Breast epithelium (tissue), 4 donors: ENCODE measurements at regions of chr20 and their contacts with region 1.

Region 1: GRCh38 chr20:35893942-35894341 is 60.4 kb downstream of the SCAND1 start:
- DNase-seq: no peak
- H3K4me3 ChIP-seq: no peak overlapping the region
- H3K27ac ChIP-seq: no peak overlapping the region
- H3K4me1 ChIP-seq: no peaks in the 10 kb centered on the region
- H3K27me3 ChIP-seq: no peaks in the 10 kb centered on the region
- CTCF ChIP-seq: no peak
- POLR2A ChIP-seq: no peak

Region 2: GRCh38 chr20:35523298-35523888 is 370.5 kb before region 1 on chr20:
- intact Hi-C with region 1: loop called (anchors 10 kb)
- DNase-seq: no peak
- H3K4me3 ChIP-seq: no peak overlapping the region
- H3K27ac ChIP-seq: no peak overlapping the region
- H3K4me1 ChIP-seq: no peaks in the 10 kb centered on the region
- H3K27me3 ChIP-seq: no peaks in the 10 kb centered on the region
- CTCF ChIP-seq: peak in 1 of 3 donors; percentile 8
- POLR2A ChIP-seq: no peak

Region 3: DNA sequence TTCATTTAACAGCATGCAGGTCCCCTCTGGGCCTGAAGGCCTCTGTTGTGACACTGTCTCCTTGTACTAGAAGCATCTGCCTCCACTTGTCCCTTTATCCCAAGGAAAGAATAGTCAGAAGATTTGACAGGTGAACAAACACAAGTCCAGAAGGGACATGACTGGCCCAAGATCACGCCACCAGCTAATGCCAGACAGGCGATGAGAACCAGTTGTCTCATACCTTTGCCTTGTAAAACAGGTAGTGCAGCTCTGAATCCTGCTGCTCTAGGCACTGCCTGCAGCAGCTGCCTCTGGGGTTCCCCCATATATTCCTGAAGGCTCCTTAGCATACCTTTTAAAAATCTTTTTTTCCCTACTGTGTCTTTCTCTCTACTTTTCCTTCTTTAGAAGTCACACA is 35.3 kb after region 1 on chr20:
- intact Hi-C with region 1: no loop called
- DNase-seq: no peak
- H3K4me3 ChIP-seq: no peak overlapping the region
- H3K27ac ChIP-seq: no peak overlapping the region
- H3K4me1 ChIP-seq: no peaks in the 10 kb centered on the region
- H3K27me3 ChIP-seq: no peaks in the 10 kb centered on the region
- CTCF ChIP-seq: no peak
- POLR2A ChIP-seq: no peak